Astrocyte of the cerebellum (primary cell): ENCODE measurements at regions of chr10 and their contacts with region 1.

Region 1: GRCh38 chr10:79904671-79905321 is 44.1 kb downstream of the SFTPD start:
- DNase-seq: no peak
- H3K4me3 ChIP-seq: peak overlapping the region; percentile 69
- CTCF ChIP-seq: no peak

Region 2: GRCh38 chr10:79374312-79375191 is 530.2 kb before region 1 on chr10:
- in situ Hi-C with region 1: loop called (anchors 25 kb)
- DNase-seq: peak; percentile 49
- H3K4me3 ChIP-seq: no peak overlapping the region
- CTCF ChIP-seq: peak; percentile 95